GM23248 (cell line): ENCODE measurements at regions of chr15 and their contacts with region 1.

Region 1: GRCh38 chr15:66841953-66842681 is 140.1 kb downstream of the SMAD6 start:
- DNase-seq: peak; percentile 98
- H3K4me3 ChIP-seq: peak overlapping the region; percentile 80
- H3K27ac ChIP-seq: peak overlapping the region; percentile 94
- H3K4me1 ChIP-seq: peaks cover 40% of the 10 kb centered on the region
- H3K27me3 ChIP-seq: no peaks in the 10 kb centered on the region

Region 2: GRCh38 chr15:66714543-66714981 is 127.6 kb before region 1 on chr15:
- in situ Hi-C with region 1: loop called (anchors 10 kb)
- DNase-seq: peak; percentile 82
- H3K4me3 ChIP-seq: peak overlapping the region; percentile 28; the same call in 1 of the 2 replicates
- H3K27ac ChIP-seq: peak overlapping the region; percentile 56
- H3K4me1 ChIP-seq: peaks cover 28% of the 10 kb centered on the region
- H3K27me3 ChIP-seq: no peaks in the 10 kb centered on the region